ENCODE measurements at regions of chr17 and their contacts with region 1.

Region 1: DNA sequence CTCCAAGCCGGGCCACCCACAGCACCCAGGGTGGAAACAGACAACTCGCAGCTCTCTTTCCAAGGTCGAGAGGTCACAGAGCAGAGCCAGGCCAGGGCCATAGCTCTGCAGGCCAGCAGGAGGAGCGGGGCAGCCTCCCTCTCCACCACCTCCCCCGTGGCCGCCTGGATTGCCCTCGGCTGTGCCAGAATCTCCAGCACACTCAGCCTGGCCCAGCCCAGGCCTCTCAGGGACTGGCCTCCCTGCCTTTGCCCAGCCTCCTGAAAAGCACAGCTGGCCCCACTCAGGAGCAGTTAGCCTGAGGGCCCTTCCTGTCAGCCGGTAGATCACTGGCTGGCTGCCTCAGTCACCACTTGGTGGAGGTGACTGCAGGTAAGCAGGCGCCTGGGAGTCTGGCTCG is 85.8 kb upstream of the SEC14L1 start:
- DNase-seq: no peak
- H3K4me3 ChIP-seq: no peak overlapping the region
- H3K27ac ChIP-seq: no peak overlapping the region
- H3K4me1 ChIP-seq: no peaks in the 10 kb centered on the region
- H3K27me3 ChIP-seq: no peaks in the 10 kb centered on the region
- CTCF ChIP-seq: no peak
- POLR2A ChIP-seq: no peak

Region 2: GRCh38 chr17:76868176-76868668 is 186.7 kb before region 1 on chr17 and contains the start of gene MGAT5B:
- intact Hi-C with region 1: loop called (anchors 5 kb)
- DNase-seq: peak; percentile 76
- H3K4me3 ChIP-seq: no peak within 1 kb of the TSS
- H3K27ac ChIP-seq: no peak within 1 kb of the TSS
- H3K4me1 ChIP-seq: peaks cover 0 to 20% of the 10 kb centered on the region in 2 donors
- H3K27me3 ChIP-seq: peaks cover 14% of the 10 kb centered on the region
- CTCF ChIP-seq: peak in 4 of 6 experiments; percentile 71 to 99 (median 94)
- POLR2A ChIP-seq: no peak
- total RNA-seq, gene MGAT5B: 0.22 to 7.4 (median 0.73) TPM in 3 of 4 donors, not detected in the other